AG04450 (cell line): ENCODE measurements at regions of chr20 and their contacts with region 1.

Region 1: DNA sequence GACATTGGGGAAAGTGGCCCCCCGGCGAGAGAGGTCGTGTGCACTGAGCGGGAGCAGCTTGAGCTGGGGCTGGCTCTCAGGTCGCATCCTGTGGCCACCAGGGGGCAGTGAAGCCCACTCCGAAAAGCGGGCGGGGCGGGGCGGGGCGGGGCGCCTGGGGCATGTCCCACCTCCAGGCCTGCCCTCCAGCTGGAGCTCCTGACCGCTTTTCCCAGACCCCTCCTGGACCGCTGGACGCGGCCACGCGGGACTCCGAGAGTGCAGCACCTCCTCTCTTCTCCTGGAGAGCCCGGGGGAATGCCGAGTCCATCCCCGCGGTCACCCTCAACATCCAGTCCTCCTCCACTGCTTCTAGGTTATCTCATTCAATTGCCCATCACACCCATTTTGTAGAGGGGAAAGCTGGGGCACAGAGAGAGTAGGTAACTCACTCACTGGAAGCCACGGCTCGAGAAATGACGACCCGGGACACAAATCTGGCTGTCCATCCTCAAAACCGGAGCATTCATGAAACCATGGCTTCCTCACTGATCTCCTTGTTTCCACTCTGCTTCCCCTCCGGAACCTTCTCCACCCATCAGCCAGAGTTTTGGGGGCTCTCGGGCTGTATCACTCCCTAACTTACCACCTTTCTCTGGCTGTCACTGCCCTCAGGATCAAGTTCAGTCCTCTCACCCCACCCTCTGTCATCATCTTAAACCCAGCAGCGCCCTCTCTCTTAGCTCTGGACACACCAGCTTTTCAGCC is 24.1 kb downstream of the COX4I2 start:
- DNase-seq: no peak
- H3K4me3 ChIP-seq: peak overlapping the region; percentile 48
- H3K27ac ChIP-seq: peak overlapping the region; percentile 47
- H3K27me3 ChIP-seq: no peaks in the 10 kb centered on the region
- CTCF ChIP-seq: peak; percentile 62

Region 2: DNA sequence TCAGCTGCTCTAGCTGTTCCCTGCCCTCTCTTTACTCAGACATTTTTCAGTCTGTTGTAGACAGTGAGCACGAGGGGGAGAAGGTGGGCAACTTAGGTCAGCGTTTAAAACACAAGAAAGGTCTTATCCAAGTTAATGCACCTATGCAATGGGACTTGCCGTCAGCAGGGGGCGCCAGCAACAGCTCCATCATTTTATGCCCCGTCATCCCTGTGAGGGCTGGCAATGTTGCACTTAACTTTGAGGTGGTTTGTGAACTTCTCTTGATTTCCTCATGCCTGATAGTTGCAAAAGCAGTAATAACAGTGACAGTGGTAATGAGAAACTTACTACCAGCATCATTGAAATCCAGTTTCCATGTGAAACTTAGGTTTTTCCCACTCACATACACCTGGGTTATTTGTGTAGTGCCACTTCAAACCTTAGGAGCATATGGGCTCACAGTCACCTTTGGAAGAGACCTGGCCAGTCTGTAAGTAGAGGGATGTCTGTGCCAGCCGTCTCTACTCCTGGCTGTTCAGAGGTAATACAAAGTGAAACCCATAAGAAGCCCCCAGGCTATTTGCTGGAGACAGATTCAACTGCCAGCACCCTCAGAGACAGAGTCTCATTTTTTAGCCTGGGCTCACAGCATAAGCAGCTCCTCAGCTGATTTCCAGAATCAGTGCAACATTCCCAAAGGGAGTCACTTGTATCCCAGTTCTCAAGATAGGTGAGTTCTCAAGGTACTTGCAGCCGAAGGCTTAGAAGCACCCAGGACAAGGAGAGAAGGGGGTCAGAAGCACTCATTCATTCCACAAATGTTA is 101.5 kb before region 1 on chr20:
- CTCF ChIA-PET with region 1: interaction called, 24 read pairs
- POLR2A ChIA-PET with region 1: no interaction called
- DNase-seq: peak; percentile 62
- H3K4me3 ChIP-seq: no peak overlapping the region
- H3K27ac ChIP-seq: peak overlapping the region; percentile 99
- H3K27me3 ChIP-seq: no peaks in the 10 kb centered on the region
- CTCF ChIP-seq: peak; percentile 94

Region 3: GRCh38 chr20:31637660-31638059 is 24.1 kb before region 1 on chr20 and contains the start of gene COX4I2:
- CTCF ChIA-PET with region 1: interaction called, 26 read pairs
- POLR2A ChIA-PET with region 1: interaction called, 6 read pairs
- DNase-seq: no peak
- H3K4me3 ChIP-seq: no peak within 1 kb of the TSS
- H3K27ac ChIP-seq: no peak within 1 kb of the TSS
- H3K27me3 ChIP-seq: peaks cover 28% of the 10 kb centered on the region
- CTCF ChIP-seq: no peak
- polyA plus RNA-seq, gene COX4I2: not detected in 2 replicates

Region 4: GRCh38 chr20:31674895-31675827 is 13.4 kb after region 1 on chr20:
- CTCF ChIA-PET with region 1: interaction called, 18 read pairs
- POLR2A ChIA-PET with region 1: interaction called, 10 read pairs
- DNase-seq: no peak
- H3K4me3 ChIP-seq: no peak overlapping the region
- H3K27ac ChIP-seq: peak overlapping the region; percentile 47
- H3K27me3 ChIP-seq: no peaks in the 10 kb centered on the region
- CTCF ChIP-seq: no peak

Region 5: GRCh38 chr20:31698803-31699718 is 37.3 kb after region 1 on chr20:
- CTCF ChIA-PET with region 1: interaction called, 14 read pairs
- POLR2A ChIA-PET with region 1: interaction called, 5 read pairs
- DNase-seq: peak; percentile 90
- H3K4me3 ChIP-seq: no peak overlapping the region
- H3K27ac ChIP-seq: peak overlapping the region; percentile 97
- H3K27me3 ChIP-seq: no peaks in the 10 kb centered on the region
- CTCF ChIP-seq: no peak

Region 6: DNA sequence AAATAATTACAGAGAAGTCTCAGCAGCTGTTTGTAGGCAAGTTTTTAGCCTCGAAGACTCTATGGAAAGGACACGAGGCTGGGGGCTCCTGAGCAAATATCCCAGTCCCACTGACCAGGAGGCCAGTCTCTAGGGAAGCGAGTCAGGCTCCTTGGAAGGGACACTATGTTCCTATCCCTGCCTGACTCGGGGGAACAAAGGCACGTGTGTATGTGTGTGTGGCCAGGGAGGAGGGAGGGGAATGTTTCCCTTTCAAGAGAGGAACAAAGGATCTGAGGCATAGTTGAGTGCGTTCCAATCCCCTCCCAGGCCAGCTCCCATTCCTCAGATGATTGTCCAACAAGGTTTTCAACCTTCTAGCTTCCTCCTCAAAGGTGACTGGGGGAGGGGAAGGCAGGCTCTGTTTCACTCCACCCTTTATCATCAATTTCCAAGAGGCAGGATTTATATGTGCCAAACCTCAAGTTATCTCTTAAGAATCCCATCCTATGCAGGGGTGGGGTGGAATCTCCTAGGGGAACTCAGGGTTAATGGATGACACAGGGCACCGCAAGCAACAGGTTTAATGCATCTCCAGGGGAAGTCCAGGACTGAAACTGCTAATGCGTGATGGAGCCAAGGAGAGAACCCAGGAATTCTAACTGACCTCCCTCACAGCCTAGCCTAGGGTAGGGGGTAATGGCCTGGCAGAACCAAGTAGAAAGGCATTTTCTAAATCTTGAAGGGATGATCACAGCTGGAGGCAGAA is 50.9 kb after region 1 on chr20:
- CTCF ChIA-PET with region 1: interaction called, 30 read pairs
- POLR2A ChIA-PET with region 1: interaction called, 4 read pairs
- DNase-seq: peak; percentile 67
- H3K4me3 ChIP-seq: peak overlapping the region; percentile 34
- H3K27ac ChIP-seq: peak overlapping the region; percentile 95
- H3K27me3 ChIP-seq: no peaks in the 10 kb centered on the region
- CTCF ChIP-seq: no peak